ENCODE measurements at regions of chr1 and their contacts with region 1.

Region 1: DNA sequence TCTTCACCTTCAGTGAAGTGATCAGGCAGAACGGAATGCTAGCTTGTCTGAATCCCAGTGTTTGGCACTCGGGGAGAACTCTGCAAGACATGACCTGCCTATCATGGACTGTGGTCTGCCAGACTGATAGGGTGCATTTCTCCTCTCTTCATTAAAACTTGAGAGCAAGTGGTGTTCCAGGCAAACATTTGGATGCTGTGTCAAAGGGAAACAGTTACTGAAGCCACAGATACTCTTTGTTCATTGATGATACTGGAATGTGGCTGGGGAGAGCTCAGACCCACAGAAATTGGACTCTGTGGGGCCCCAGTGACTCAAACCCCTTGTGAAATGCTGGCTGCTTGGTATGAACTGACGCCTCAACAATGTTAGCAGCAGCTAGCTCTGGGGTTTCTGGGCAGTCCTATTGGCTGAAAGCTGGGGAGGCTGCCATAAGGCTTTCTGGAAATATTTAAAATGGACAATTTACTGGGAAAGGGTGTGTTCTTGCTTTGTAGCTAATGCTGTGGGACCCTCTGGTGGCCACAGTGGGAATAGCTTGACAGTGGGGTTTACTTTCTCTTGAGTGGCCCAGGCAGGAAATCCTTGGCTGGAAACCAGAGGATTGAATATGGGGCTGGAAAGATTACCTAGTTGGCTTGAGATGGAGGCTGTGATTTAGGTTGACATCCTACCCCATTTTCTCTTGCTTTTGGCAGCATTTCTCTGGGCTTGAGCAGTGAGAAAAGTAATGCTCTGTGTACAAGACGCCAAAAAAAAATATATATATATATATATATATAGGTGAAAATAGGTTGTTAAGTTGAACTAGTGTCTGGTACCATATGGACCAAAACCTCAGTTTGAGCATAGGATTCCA is 8.0 kb upstream of the S100A10 start:
- DNase-seq: peak; percentile 85
- ATAC-seq: peak; percentile 79
- H3K4me3 ChIP-seq: no peak overlapping the region
- H3K27ac ChIP-seq: no peak overlapping the region
- H3K4me1 ChIP-seq: peaks cover 4 to 19% of the 10 kb centered on the region in 2 experiments; a peak in 3 of 4 replicates
- H3K27me3 ChIP-seq: no peaks in the 10 kb centered on the region
- CTCF ChIP-seq: peak; percentile 91 to 95 (median 92)
- POLR2A ChIP-seq: no peak
- RAD21 ChIP-seq: peak; percentile 96

Region 2: GRCh38 chr1:151888972-151889570 is 112.5 kb before region 1 on chr1:
- CTCF ChIA-PET with region 1: interaction called, 14 read pairs
- POLR2A ChIA-PET with region 1: no interaction called
- RAD21 ChIA-PET with region 1: no interaction called
- intact Hi-C with region 1: loop called (anchors 1 kb)
- DNase-seq: no peak
- ATAC-seq: peak; percentile 72
- H3K4me3 ChIP-seq: no peak overlapping the region
- H3K27ac ChIP-seq: no peak overlapping the region
- H3K4me1 ChIP-seq: peaks cover 8 to 12% of the 10 kb centered on the region in 2 experiments; a peak in 2 of 4 replicates
- H3K27me3 ChIP-seq: no peaks in the 10 kb centered on the region
- CTCF ChIP-seq: peak; percentile 22 to 55 (median 53); a peak in 4 of 6 replicates
- POLR2A ChIP-seq: no peak
- RAD21 ChIP-seq: peak; percentile 73

Region 3: DNA sequence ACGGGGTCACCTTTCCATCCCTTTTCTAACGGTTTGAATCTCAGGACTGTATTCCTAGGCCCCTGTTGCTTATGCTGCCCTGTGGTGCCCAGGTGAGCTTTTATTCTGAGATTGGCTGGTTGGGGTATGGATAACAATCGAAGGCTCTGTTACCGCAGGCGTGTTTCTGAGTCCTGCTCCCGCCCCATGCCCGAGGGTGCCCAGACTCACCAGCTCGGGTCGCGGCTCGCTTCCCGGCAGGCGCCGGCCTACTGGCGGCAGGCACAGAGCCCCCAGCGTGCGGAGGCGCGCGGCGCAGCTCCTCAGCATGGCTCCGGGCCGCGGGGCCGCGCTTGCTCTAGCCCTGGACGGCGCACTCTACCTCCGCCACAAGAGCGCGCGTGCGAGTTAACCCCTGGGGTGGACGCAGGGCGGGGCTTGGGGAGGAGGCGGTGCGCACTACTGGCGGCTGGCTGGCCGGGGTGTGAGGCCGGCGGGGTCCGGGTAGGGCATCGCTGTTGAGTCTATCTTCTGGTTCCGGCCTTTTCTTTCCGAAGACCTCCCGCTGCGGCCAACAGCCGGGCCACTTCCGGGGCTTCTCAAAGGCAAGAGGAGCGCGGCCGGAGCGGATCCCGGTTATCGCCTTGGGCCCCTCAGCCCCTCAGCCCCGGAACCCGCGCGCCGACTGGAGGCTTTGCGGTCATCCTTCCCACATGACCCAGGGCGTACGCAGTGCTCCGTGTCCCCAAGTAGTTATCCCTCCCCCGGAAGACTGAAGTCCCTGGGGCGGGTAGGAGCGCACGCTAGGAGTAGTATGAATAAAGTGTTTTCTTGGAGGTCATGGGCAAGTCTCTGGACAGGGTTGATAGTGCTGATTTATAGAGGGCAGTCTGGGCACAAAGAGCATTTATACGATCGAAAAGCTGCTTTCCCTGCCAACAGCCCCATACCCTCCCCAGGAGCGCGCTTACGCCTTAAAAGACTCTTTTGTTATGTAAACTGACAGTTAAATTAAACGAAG is 92.2 kb before region 1 on chr1 and contains the start of gene THEM4:
- CTCF ChIA-PET with region 1: interaction called, 31 read pairs
- POLR2A ChIA-PET with region 1: interaction called, 3 read pairs
- RAD21 ChIA-PET with region 1: no interaction called
- intact Hi-C with region 1: no loop called
- DNase-seq: peak; percentile 92
- ATAC-seq: peak; percentile 95
- H3K4me3 ChIP-seq: peak within 1 kb of the TSS; percentile 86 to 87
- H3K27ac ChIP-seq: peak within 1 kb of the TSS; percentile 74
- H3K4me1 ChIP-seq: peaks cover 7 to 14% of the 10 kb centered on the region in 2 experiments; a peak in 3 of 4 replicates
- H3K27me3 ChIP-seq: no peaks in the 10 kb centered on the region
- CTCF ChIP-seq: no peak
- POLR2A ChIP-seq: peak; percentile 92
- RAD21 ChIP-seq: no peak
- total RNA-seq, gene THEM4: 17.0 TPM

Region 4: GRCh38 chr1:151968058-151968457 is 33.6 kb before region 1 on chr1:
- CTCF ChIA-PET with region 1: interaction called, 168 read pairs
- POLR2A ChIA-PET with region 1: interaction called, 10 read pairs
- RAD21 ChIA-PET with region 1: interaction called, 19 to 25 read pairs
- intact Hi-C with region 1: loop called (anchors 1 kb)
- DNase-seq: no peak
- ATAC-seq: peak; percentile 71
- H3K4me3 ChIP-seq: no peak overlapping the region
- H3K27ac ChIP-seq: no peak overlapping the region
- H3K4me1 ChIP-seq: peaks cover 35 to 50% of the 10 kb centered on the region in 2 experiments; a peak in 3 of 4 replicates
- H3K27me3 ChIP-seq: no peaks in the 10 kb centered on the region
- CTCF ChIP-seq: peak; percentile 79 to 91 (median 85)
- POLR2A ChIP-seq: no peak
- RAD21 ChIP-seq: peak; percentile 98

Region 5: DNA sequence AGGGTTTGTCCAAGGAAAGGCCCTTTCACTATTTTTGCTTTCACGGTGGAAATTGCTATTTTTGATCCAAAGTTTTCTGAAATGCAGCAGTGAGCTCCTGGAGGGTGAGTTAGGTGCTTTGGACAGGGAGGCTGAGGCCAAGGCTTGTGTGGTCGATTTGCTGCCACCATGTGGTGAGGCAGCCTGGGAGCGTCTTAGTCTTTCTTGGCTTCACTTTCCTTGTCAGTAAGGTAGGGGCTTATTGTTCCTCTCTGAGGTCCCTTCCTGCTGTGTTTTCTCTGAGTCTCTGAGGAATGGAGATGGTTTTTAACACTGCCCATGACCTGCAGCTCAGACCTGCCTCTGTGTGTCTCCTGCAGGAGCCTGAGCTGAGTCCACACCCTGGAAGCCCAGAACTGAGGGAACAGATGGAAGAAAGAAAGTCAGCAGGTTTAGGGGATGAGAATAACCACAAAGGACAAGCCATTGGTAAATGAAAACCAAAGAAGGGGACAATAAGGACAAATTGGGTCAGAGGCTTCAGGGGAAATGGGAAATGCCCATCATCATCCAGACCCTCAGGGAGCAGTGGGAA is 12.1 kb after region 1 on chr1:
- CTCF ChIA-PET with region 1: interaction called, 18 read pairs
- POLR2A ChIA-PET with region 1: interaction called, 3 read pairs
- RAD21 ChIA-PET with region 1: interaction called in 1 of 2 experiments, 4 read pairs
- intact Hi-C with region 1: no loop called
- DNase-seq: no peak
- ATAC-seq: peak; percentile 83
- H3K4me3 ChIP-seq: no peak overlapping the region
- H3K27ac ChIP-seq: no peak overlapping the region
- H3K4me1 ChIP-seq: peaks cover 0 to 4% of the 10 kb centered on the region in 2 experiments; a peak in 1 of 4 replicates
- H3K27me3 ChIP-seq: no peaks in the 10 kb centered on the region
- CTCF ChIP-seq: peak; percentile 61 to 94 (median 84); a peak in 5 of 6 replicates
- POLR2A ChIP-seq: no peak
- RAD21 ChIP-seq: peak; percentile 62

Region 6: DNA sequence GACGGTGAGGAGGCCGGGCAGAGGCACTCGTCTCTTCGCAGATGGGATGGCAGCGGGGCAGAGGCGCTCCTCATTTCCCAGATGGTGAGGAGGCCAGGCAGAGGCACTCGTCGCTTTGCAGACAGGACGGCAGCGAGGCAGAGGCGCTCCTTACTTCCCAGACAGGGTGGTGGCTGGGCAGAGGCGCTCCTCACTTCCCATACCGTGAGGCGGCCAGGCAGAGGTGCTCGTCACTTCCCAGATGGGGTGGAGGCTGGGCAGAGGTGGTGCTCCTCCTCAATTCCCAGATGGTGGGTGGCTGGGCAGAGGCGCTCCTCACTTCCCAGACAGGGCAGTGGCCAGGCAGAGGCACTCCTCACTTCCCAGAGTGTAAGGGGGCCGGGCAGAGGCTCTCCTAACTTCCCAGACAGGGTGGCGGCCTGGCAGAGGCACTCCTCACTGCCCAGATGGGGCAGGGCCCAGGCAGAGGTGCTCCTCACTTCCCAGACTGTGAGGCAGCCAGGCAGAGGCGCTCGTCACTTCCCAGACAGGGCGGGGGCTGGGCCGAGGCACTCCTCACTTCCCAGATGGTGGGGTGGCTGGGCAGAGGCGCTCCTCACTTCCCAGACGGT is 77.3 kb after region 1 on chr1:
- CTCF ChIA-PET with region 1: no interaction called
- POLR2A ChIA-PET with region 1: no interaction called
- RAD21 ChIA-PET with region 1: no interaction called
- intact Hi-C with region 1: no loop called
- DNase-seq: no peak
- ATAC-seq: no peak
- H3K4me3 ChIP-seq: no peak overlapping the region
- H3K27ac ChIP-seq: no peak overlapping the region
- H3K4me1 ChIP-seq: no peaks in the 10 kb centered on the region
- H3K27me3 ChIP-seq: peaks cover 14% of the 10 kb centered on the region
- CTCF ChIP-seq: no peak
- POLR2A ChIP-seq: no peak
- RAD21 ChIP-seq: no peak

Measured in HCT116 (cell line).